ENCODE measurements at regions of chr3 and their contacts with region 1.

Region 1: DNA sequence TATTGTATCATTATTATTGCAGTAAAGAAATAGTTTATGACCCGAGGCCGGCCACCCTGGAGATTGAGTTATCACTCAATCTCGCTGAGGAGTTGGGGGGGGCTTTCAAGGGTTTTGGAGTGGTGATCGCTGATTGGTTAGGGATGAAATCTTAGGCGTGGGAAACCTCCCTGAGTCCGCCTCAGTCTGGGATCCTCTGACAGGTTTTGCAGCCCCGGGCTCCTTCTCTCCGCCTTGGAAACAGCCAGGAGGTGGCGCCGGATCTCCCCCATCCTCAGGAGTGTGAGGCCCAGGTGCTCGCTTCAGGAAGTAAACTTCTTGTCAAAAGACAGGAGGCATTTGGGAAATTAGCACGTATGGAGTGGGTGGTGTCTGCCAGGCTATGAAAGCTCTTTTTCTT is 41.1 kb upstream of the SEC61A1 start:
- DNase-seq: peak; percentile 46
- H3K4me3 ChIP-seq: no peak overlapping the region
- H3K27ac ChIP-seq: no peak overlapping the region
- H3K4me1 ChIP-seq: peaks cover 13% of the 10 kb centered on the region
- H3K27me3 ChIP-seq: no peaks in the 10 kb centered on the region
- CTCF ChIP-seq: peak; percentile 29 to 68

Region 2: GRCh38 chr3:126578702-126579101 is 1432.4 kb before region 1 on chr3:
- CTCF ChIA-PET with region 1: no interaction called
- dilution Hi-C with region 1: no loop called
- in situ Hi-C with region 1: no loop called
- intact Hi-C with region 1: no loop called
- DNase-seq: no peak
- H3K4me3 ChIP-seq: no peak overlapping the region
- H3K27ac ChIP-seq: no peak overlapping the region
- H3K4me1 ChIP-seq: no peaks in the 10 kb centered on the region
- H3K27me3 ChIP-seq: no peaks in the 10 kb centered on the region
- CTCF ChIP-seq: no peak

Region 3: GRCh38 chr3:128060473-128061381 is 49.6 kb after region 1 on chr3:
- CTCF ChIA-PET with region 1: no interaction called
- dilution Hi-C with region 1: no loop called
- in situ Hi-C with region 1: no loop called
- intact Hi-C with region 1: loop called (anchors 2 kb)
- DNase-seq: peak; percentile 91
- H3K4me3 ChIP-seq: no peak overlapping the region
- H3K27ac ChIP-seq: peak overlapping the region; percentile 70
- H3K4me1 ChIP-seq: peaks cover 27% of the 10 kb centered on the region
- H3K27me3 ChIP-seq: no peaks in the 10 kb centered on the region
- CTCF ChIP-seq: no peak